ENCODE measurements at regions of chr11 and their contacts with region 1.

Region 1: GRCh38 chr11:65180877-65181568 is 705 bp upstream of the CAPN1 start:
- DNase-seq: peak; percentile 62 to 91 (median 80)
- ATAC-seq: peak; percentile 63 to 72 (median 64)
- H3K4me3 ChIP-seq: peak overlapping the region; percentile 82 to 94 (median 87)
- H3K27ac ChIP-seq: peak overlapping the region; percentile 87 to 96 (median 92)
- H3K4me1 ChIP-seq: peaks cover 0 to 17% (median 0%) of the 10 kb centered on the region in 3 donors
- H3K27me3 ChIP-seq: no peaks in the 10 kb centered on the region
- CTCF ChIP-seq: peak; percentile 20 to 44 (median 32)

Region 2: GRCh38 chr11:65083834-65084597 is 97.0 kb before region 1 on chr11 and contains the starts of genes CDCA5 and ZFPL1:
- intact Hi-C with region 1: no loop called
- DNase-seq: peak; percentile 91 to 98 (median 96)
- ATAC-seq: peak; percentile 97 to 99 (median 99)
- H3K4me3 ChIP-seq: peak within 1 kb of the TSS; percentile 39 to 80 (median 66)
- H3K27ac ChIP-seq: peak within 1 kb of the TSS; percentile 78 to 89 (median 84)
- H3K4me1 ChIP-seq: peaks cover 0 to 15% (median 11%) of the 10 kb centered on the region in 3 donors
- H3K27me3 ChIP-seq: no peaks in the 10 kb centered on the region
- CTCF ChIP-seq: no peak
- total RNA-seq, gene CDCA5: 0.08 to 1.2 (median 0.50) TPM
- total RNA-seq, gene ZFPL1: 15.2 to 19.6 (median 16.6) TPM

Region 3: DNA sequence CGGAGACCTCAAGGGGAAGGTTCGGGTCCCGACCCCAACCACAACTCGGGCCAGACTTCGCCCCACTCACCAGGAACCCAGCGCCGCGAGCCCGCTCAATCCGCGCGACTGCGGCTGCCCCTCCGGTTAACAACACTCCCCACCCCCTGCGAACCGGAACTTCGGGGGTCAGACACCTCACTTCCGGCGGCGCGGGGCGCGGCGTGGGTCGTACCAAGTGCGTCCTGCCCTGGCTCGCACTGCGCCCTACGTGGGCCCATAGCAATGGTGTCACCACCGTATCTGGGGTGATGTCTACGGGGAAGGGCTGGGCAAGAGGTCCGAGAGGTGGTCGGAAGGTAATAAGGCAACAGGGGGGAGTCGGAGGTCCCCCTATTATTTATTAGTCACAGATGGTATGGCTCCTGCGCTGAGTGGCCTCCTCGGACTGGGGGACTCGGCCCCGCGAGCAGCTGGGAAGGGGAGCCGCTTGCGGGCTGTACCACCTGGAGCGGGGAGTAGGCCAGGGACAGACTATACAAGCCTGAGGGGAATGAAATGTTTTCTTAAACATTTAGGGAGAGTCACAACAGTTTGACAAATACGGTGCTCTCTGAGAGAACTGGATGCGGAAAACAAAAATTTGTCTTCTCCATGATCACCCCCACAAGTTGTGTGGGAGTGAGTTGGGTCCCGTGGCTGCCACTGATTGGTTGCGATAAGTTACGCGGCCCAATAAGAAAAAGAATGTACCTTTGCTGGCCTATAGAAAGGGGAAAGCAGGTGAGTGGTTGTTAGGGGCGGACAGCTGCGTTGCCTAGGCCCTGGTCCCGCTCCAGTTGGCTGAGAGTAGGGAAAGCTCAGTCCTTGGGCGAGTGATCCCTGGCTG is 46.4 kb before region 1 on chr11 and contains the start of gene SYVN1:
- intact Hi-C with region 1: loop called in 2 of 3 experiments (anchors 5 kb)
- DNase-seq: peak; percentile 96 to 99 (median 99)
- ATAC-seq: peak; percentile 82 to 92 (median 84)
- H3K4me3 ChIP-seq: peak within 1 kb of the TSS; percentile 70 to 93 (median 82)
- H3K27ac ChIP-seq: peak within 1 kb of the TSS; percentile 99 to 100 (median 99)
- H3K4me1 ChIP-seq: peaks cover 14 to 32% (median 26%) of the 10 kb centered on the region in 3 donors
- H3K27me3 ChIP-seq: no peaks in the 10 kb centered on the region
- CTCF ChIP-seq: no peak
- total RNA-seq, gene SYVN1: 47.5 to 98.2 (median 66.3) TPM

Region 4: DNA sequence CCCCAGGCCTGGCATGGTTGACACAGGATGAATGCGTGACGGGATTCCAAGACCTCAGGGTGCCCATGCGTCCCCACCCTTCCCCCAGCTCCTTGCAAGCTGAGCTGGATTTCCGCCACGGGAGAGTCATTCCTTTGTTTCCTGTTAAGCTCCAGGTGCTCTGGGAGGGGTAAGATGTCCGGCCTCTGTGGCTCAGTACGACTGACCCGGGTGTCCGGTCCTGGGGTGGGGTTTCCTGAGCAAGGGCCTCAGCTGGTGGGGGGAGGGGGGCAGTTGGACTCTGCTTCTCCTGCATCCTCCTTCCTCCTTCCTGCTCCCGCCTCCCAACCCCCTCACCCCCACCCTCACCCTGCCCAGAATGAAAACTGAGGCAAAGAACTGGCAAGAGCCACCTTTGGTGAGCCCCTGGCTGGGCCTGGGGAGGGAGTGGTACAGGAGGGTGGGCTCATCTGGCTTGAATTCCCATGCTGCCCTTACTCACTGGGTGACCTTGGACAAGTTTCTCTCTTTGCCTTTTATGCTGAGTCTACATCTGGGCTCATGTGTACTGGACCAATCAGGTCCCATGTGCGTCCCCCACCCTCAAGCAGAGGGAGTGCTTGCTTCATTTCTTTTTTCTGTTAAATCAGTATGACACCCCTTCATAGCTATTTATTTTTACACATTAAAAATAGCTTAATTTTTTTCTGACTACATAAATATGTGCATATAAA is 136.2 kb after region 1 on chr11:
- intact Hi-C with region 1: no loop called
- DNase-seq: peak in 4 of 6 donors; percentile 30 to 54 (median 41)
- ATAC-seq: peak in 2 of 4 donors; percentile 1 to 2
- H3K4me3 ChIP-seq: peak overlapping the region in 1 of 4 donors; percentile 92
- H3K27ac ChIP-seq: peak overlapping the region in 2 of 4 donors; percentile 3 to 13
- H3K4me1 ChIP-seq: peaks cover 0 to 18% (median 3%) of the 10 kb centered on the region in 3 donors
- H3K27me3 ChIP-seq: no peaks in the 10 kb centered on the region
- CTCF ChIP-seq: no peak

Region 5: DNA sequence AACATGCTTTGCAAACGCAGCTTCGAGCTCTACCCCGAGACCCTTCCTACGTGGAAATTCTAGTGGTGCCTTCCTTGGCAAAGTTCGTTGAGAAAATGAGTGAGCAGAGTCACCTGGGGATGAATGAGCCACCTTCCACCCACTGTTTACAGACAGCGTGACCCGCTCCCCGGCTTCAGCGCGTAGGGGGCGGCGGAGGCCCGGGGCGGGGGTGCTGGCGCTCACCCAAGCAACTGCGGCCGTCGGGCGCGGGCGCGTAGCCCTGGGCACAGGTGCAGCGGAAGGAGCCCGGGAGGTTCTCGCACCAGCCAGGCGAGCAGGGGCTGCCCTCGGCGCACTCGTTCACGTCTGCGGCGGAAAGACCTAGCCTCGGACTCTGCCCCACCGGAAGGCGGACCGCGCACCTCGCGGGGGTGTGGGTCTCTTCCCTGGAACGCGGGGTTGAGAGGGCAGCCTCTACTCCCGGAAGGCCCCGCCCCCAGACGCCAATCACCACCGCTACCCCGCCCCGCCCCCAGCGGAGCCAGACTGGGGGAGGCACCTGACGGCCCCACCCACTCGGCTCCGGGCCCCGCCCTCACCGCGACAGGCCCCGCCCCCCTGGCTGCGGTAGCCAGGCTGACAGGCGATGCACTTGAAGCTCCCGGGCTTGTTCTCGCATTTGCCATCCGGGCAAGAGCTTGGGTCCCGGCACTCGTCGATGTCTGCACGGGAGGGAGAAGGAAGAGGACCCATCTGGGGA is 365.4 kb after region 1 on chr11:
- intact Hi-C with region 1: no loop called
- DNase-seq: peak; percentile 93 to 99 (median 96)
- ATAC-seq: peak; percentile 92 to 95 (median 94)
- H3K4me3 ChIP-seq: peak overlapping the region; percentile 12 to 55 (median 29)
- H3K27ac ChIP-seq: peak overlapping the region; percentile 60 to 86 (median 76)
- H3K4me1 ChIP-seq: peaks cover 0 to 8% (median 2%) of the 10 kb centered on the region in 3 donors
- H3K27me3 ChIP-seq: no peaks in the 10 kb centered on the region
- CTCF ChIP-seq: no peak